Heart right ventricle (tissue), 16 donors: ENCODE measurements at regions of chr9 and their contacts with region 1.

Region 1: GRCh38 chr9:27117489-27118135 is 8.6 kb downstream of the TEK start:
- DNase-seq: peak; percentile 78 to 82
- ATAC-seq: peak; percentile 92 to 97 (median 95)
- H3K4me3 ChIP-seq: peak overlapping the region in 1 of 10 donors; percentile 16
- H3K27ac ChIP-seq: peak overlapping the region in 9 of 10 donors; percentile 57 to 89 (median 77)
- H3K4me1 ChIP-seq: peaks cover 7 to 83% (median 18%) of the 10 kb centered on the region in 9 donors
- H3K27me3 ChIP-seq: no peaks in the 10 kb centered on the region
- CTCF ChIP-seq: no peak

Region 2: GRCh38 chr9:27154908-27155307 is 37.3 kb after region 1 on chr9:
- intact Hi-C with region 1: loop called in 1 of 10 experiments (anchors 5 kb)
- DNase-seq: no peak
- ATAC-seq: peak in 2 of 8 donors; percentile 13 to 62
- H3K4me3 ChIP-seq: no peak overlapping the region
- H3K27ac ChIP-seq: peak overlapping the region in 1 of 10 donors; percentile 12
- H3K4me1 ChIP-seq: peaks cover 0 to 55% (median 35%) of the 10 kb centered on the region in 9 donors
- H3K27me3 ChIP-seq: no peaks in the 10 kb centered on the region
- CTCF ChIP-seq: no peak

Region 3: DNA sequence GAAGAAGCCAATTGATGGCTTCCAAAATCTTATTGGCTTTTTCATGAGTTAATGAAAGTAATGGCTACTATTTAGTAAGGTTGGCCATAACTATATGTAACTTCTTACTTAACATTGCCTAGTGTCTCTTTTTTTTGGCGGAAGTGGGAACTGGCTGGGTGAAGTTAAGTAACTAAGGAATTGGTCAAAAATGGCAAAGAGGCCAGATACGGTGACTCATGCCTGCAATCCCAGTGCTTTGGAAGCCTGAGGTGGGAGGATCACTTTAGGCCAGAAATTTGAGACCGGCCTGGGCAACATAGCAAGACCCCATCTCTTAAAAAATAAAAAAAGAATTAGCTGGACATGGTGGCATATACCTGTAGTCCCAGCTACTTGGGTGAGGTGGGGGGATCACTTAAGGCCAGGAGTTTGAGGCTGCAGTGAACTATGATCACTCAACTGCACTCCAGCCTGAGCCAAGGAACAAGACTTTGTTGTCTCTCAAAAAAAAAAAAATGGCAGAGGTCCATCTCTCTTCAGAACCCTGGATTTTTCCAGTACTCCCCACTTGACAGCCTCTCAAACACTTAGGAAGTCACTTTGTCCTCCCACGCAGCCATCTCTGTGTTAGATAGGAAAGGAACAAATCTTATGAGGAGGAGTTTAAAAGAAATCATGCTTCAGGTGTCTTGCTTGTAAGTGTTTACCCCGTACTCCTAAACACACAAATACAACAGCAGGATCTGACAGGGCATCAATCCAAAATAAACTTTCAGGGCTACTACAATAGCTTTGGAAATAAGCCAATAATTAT is 67.1 kb after region 1 on chr9:
- intact Hi-C with region 1: loop called in 2 of 10 experiments (anchors 5 kb)
- DNase-seq: peak in 1 of 2 donors; percentile 19
- ATAC-seq: peak in 7 of 8 donors; percentile 37 to 80 (median 64)
- H3K4me3 ChIP-seq: no peak overlapping the region
- H3K27ac ChIP-seq: peak overlapping the region in 5 of 10 donors; percentile 12 to 56 (median 33)
- H3K4me1 ChIP-seq: peaks cover 0 to 45% (median 25%) of the 10 kb centered on the region in 9 donors
- H3K27me3 ChIP-seq: no peaks in the 10 kb centered on the region
- CTCF ChIP-seq: no peak

Region 4: GRCh38 chr9:27194401-27195091 is 76.9 kb after region 1 on chr9:
- intact Hi-C with region 1: loop called in 4 of 10 experiments (anchors 5 kb)
- DNase-seq: no peak
- ATAC-seq: peak in 1 of 8 donors; percentile 42
- H3K4me3 ChIP-seq: no peak overlapping the region
- H3K27ac ChIP-seq: peak overlapping the region in 4 of 10 donors; percentile 23 to 66 (median 56)
- H3K4me1 ChIP-seq: peaks cover 0 to 56% (median 28%) of the 10 kb centered on the region in 9 donors
- H3K27me3 ChIP-seq: no peaks in the 10 kb centered on the region
- CTCF ChIP-seq: no peak